AG04449 (cell line): ENCODE measurements at regions of chr11 and their contacts with region 1.

Region 1: GRCh38 chr11:59158206-59159068 is 13.5 kb upstream of the DTX4 start:
- DNase-seq: no peak
- H3K4me3 ChIP-seq: no peak overlapping the region
- CTCF ChIP-seq: peak; percentile 63

Region 2: DNA sequence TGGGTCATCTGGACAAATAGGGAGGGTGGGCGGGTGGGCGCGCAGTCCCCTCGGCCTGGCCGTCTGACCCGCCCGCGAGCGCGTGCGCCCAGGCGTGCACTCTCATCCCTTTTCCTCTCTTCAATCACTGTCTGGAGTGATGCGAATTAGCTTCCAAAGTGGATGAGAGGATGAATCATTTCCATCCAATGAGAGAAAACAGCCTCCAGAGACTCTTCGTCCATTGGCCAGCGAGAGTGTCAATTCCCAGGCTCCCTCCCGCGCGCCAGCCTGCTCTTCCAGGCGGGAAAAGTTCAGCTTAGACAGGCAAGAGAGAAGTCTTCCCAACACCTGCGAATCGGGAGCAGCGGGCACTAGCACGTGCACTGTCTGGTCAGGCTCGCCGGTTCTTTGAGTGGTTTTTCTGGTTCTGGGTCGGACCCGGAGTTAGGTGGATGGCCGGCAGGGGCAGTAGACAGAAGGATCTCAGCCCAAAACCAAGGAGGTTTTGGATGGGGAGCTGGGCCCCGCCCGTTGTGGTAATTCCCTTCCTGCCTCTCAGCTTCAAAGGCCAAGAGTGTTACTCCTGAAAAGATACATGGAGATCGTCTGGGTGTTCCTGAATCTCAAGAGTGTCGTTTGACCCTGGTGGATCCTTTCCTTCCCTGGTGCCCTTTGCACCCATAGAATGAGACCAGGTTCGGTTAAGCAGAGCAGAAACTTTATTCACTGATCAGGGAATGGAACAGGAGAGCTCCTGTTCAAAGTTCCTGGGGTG is 252.5 kb before region 1 on chr11:
- CTCF ChIA-PET with region 1: interaction called, 14 read pairs
- POLR2A ChIA-PET with region 1: no interaction called
- DNase-seq: peak; percentile 41
- H3K4me3 ChIP-seq: peak overlapping the region; percentile 75
- CTCF ChIP-seq: peak; percentile 54

Region 3: GRCh38 chr11:59011655-59012397 is 146.6 kb before region 1 on chr11:
- CTCF ChIA-PET with region 1: no interaction called
- POLR2A ChIA-PET with region 1: no interaction called
- DNase-seq: no peak
- H3K4me3 ChIP-seq: no peak overlapping the region
- CTCF ChIP-seq: no peak

Region 4: DNA sequence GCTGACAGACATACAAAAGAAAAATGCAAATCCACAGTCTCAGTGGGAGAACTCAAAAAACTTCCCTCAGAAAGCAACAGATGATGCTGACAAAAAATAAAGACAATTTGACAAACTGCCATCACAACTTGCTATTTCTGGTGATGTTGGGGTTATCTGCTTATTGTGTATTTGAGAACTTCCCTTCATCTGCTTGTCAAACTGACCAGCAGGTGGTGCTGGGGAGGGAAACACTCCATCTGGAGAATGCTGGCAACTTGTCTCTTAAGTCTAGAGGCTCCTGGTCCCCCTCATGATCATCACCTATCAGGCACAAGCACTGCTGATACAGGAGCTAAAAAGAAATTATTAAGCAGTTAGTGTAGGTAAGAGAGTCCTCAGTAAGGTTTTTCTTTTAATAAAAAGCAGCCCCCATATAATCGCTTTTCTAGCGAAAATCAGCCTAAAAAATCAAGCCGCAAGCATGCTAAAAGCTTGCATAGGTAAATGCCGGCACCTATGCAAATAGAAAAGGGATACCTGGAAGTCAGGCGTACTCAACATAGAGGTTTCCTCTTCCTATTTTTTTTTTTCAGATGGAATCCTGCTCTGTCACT is 61.2 kb before region 1 on chr11:
- CTCF ChIA-PET with region 1: interaction called, 49 read pairs
- POLR2A ChIA-PET with region 1: no interaction called
- DNase-seq: no peak
- H3K4me3 ChIP-seq: no peak overlapping the region
- CTCF ChIP-seq: peak; percentile 68

Region 5: GRCh38 chr11:59135648-59136461 is 22.6 kb before region 1 on chr11:
- CTCF ChIA-PET with region 1: interaction called, 73 read pairs
- POLR2A ChIA-PET with region 1: no interaction called
- DNase-seq: no peak
- H3K4me3 ChIP-seq: peak overlapping the region; percentile 30; the same call in 1 of the 2 replicates
- CTCF ChIP-seq: peak; percentile 100

Region 6: DNA sequence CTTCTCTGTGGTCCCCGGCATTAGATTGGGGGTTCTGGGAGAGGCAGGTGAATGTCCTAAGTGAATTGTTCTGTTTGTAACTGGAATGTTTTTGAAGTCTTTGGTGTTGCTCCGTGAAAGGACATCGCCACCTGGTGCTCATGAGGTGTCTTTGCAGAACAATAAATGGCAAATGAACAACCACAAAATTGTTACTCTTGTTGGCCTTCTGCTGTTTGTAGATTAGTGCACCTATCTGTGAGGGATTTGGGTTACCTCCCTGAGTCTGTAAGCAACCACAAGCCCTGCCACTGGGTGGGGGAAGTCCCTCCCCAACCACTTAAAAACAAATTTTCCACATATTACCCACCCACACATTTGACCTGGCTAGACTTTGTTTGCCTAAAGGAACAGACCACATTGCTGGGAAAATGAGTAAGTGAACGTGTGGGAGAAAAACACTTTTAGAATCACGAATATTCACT is 49.6 kb after region 1 on chr11:
- CTCF ChIA-PET with region 1: interaction called, 450 read pairs
- POLR2A ChIA-PET with region 1: no interaction called
- DNase-seq: peak; percentile 21
- H3K4me3 ChIP-seq: no peak overlapping the region
- CTCF ChIP-seq: peak; percentile 68

Region 7: DNA sequence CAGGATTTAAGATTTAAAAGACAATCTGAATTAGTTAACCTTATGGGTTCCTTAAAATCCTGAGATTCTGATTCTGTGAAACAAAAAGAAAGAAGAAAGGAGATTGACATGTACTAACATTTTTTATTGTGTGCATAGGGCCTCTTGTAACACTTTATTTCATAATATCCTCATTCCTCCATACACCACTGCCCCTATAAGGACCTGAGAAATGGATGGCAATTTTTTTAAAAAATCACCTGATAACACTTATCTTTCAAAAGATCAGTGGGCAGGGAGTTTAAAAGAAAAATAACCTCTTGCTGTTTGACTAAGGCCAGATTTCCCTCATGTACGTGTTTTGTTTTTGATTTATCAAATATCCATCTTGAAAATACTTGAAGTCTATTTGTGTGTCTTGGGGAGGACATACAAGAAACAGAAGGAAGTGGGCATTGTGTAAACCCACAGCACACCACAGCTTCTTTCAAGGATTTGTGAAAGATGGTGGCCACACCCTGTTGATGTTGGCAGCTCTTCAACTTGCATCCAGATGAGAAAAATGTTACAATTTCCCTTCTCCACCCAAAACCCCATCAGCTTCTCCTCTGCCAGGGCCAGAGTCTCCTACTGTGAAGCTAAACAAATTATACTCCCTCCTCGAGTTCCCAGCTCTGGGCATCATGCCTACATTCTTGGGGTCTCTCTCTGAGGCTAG is 89.2 kb after region 1 on chr11:
- CTCF ChIA-PET with region 1: no interaction called
- POLR2A ChIA-PET with region 1: no interaction called
- DNase-seq: no peak
- H3K4me3 ChIP-seq: no peak overlapping the region
- CTCF ChIP-seq: no peak

Region 8: GRCh38 chr11:59259867-59260475 is 101.5 kb after region 1 on chr11:
- CTCF ChIA-PET with region 1: no interaction called
- POLR2A ChIA-PET with region 1: no interaction called
- DNase-seq: no peak
- H3K4me3 ChIP-seq: no peak overlapping the region
- CTCF ChIP-seq: no peak

Region 9: DNA sequence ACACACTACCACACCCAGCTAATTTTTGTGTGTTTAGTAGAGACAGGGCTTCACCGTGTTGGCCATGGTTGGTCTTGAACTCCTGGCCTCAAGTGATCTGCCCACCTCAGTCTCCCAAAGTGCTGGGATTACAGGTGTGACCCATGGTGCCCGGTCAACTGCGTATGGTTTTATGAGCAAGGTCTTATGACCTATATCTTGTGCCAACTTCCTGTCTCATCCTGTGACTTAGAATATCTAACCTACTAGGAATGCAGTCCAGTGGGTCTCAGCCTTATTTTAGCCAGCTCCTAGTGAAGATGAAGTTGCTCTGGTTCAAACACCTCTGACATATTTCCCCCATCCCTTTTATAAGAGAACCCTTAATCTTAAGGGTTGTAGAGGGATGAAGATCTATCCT is 134.2 kb after region 1 on chr11:
- CTCF ChIA-PET with region 1: no interaction called
- POLR2A ChIA-PET with region 1: no interaction called
- DNase-seq: no peak
- H3K4me3 ChIP-seq: no peak overlapping the region
- CTCF ChIP-seq: no peak